ENCODE measurements at regions of chr11 and their contacts with region 1.

Region 1: DNA sequence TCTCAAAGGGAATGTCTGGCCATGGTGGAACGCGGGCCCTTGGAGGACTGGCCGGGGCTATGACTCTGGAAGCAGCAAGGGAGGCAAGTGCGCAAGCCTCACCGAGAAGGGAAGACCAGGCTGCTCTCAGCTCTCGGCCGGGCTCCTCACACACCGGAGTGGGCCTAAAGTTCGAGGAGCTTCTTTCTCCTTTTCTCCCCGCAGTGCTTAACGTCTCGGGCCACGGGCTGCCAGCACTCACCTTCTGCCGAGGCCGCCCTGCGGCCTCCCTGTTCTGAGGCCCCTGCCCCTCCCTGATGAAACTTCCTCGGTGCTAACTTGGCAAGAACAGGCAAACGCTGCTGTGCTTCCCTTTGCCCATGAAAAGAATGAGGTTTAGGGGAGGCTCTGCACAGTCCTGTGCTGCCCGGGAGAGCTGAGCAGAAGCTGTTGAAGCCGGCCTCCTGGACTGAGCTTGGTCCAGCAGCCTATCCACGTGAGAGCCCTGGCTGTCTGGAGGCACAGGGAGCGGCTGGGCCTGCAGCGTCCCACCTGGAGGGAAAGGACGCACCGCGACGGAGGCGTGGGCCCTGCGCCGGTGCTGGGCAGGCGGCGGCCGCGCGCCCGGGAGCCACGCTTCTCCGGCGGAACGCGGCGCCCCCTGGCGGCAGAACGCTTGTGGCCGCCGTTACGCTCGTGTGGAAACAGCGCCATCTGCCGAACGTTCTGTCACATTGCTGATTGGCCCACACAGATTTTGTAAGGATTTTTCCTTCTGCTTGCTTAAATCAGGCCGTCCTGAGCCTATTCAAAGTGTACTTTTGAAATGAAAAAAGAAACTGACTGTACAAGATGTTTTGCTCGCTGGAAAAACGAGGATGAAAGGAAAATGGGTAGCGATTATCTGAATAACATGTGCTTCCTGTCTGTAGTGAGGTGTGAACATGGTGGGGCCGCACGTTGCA is 65.0 kb upstream of the TMEM45B start:
- DNase-seq: peak; percentile 67
- ATAC-seq: peak; percentile 94
- H3K4me3 ChIP-seq: no peak overlapping the region
- H3K27ac ChIP-seq: no peak overlapping the region
- H3K4me1 ChIP-seq: no peaks in the 10 kb centered on the region
- H3K27me3 ChIP-seq: peaks cover 17% of the 10 kb centered on the region
- CTCF ChIP-seq: peak; percentile 100
- POLR2A ChIP-seq: no peak
- RAD21 ChIP-seq: peak; percentile 94

Region 2: GRCh38 chr11:129143335-129143734 is 607.3 kb before region 1 on chr11:
- CTCF ChIA-PET with region 1: no interaction called
- POLR2A ChIA-PET with region 1: no interaction called
- dilution Hi-C with region 1: no loop called
- in situ Hi-C with region 1: no loop called
- intact Hi-C with region 1: no loop called
- DNase-seq: peak; percentile 99
- ATAC-seq: peak; percentile 99
- H3K4me3 ChIP-seq: no peak overlapping the region
- H3K27ac ChIP-seq: no peak overlapping the region
- H3K4me1 ChIP-seq: no peaks in the 10 kb centered on the region
- H3K27me3 ChIP-seq: no peaks in the 10 kb centered on the region
- CTCF ChIP-seq: no peak
- POLR2A ChIP-seq: no peak
- RAD21 ChIP-seq: no peak

Region 3: DNA sequence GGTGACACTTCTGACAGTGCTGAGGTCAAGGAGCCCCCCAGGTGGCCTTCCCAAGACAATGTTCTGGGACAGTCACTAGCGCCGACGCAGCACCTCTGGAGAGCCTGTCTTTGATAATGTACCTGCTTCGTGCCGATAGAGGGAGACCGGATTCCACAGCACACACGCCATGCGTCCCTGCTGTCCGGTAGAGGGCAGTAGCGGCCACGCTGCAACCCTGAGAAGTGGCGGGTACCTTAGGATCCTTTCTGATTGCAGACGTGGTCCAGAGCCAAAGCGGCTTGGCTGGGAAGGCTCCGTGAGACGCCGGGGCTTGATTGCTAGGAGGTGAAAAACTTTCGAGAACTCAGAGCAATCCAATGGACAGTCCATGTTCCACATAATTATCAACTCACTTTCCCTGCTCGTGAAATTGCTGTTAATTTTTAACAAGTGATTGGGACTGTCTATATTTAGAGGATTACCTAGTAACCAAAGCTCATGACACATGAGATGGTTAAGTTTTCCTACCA is 386.4 kb before region 1 on chr11:
- CTCF ChIA-PET with region 1: interaction called, 9 read pairs
- POLR2A ChIA-PET with region 1: no interaction called
- dilution Hi-C with region 1: no loop called
- in situ Hi-C with region 1: loop called (anchors 5 kb)
- intact Hi-C with region 1: loop called (anchors 1 kb)
- DNase-seq: peak; percentile 82
- ATAC-seq: peak; percentile 100
- H3K4me3 ChIP-seq: no peak overlapping the region
- H3K27ac ChIP-seq: no peak overlapping the region
- H3K4me1 ChIP-seq: no peaks in the 10 kb centered on the region
- H3K27me3 ChIP-seq: peaks cover 9% of the 10 kb centered on the region
- CTCF ChIP-seq: peak; percentile 100
- POLR2A ChIP-seq: peak; percentile 26; the same call in 1 of the 2 replicates
- RAD21 ChIP-seq: peak; percentile 97

Region 4: GRCh38 chr11:129410395-129410960 is 340.1 kb before region 1 on chr11:
- CTCF ChIA-PET with region 1: no interaction called
- POLR2A ChIA-PET with region 1: no interaction called
- dilution Hi-C with region 1: no loop called
- in situ Hi-C with region 1: no loop called
- intact Hi-C with region 1: no loop called
- DNase-seq: no peak
- ATAC-seq: no peak
- H3K4me3 ChIP-seq: no peak overlapping the region
- H3K27ac ChIP-seq: no peak overlapping the region
- H3K4me1 ChIP-seq: no peaks in the 10 kb centered on the region
- H3K27me3 ChIP-seq: no peaks in the 10 kb centered on the region
- CTCF ChIP-seq: no peak
- POLR2A ChIP-seq: no peak
- RAD21 ChIP-seq: no peak

Region 5: GRCh38 chr11:129695575-129696308 is 54.9 kb before region 1 on chr11:
- CTCF ChIA-PET with region 1: no interaction called
- POLR2A ChIA-PET with region 1: no interaction called
- dilution Hi-C with region 1: no loop called
- in situ Hi-C with region 1: no loop called
- intact Hi-C with region 1: no loop called
- DNase-seq: peak; percentile 13
- ATAC-seq: peak; percentile 93
- H3K4me3 ChIP-seq: no peak overlapping the region
- H3K27ac ChIP-seq: no peak overlapping the region
- H3K4me1 ChIP-seq: no peaks in the 10 kb centered on the region
- H3K27me3 ChIP-seq: peaks cover 14% of the 10 kb centered on the region
- CTCF ChIP-seq: peak; percentile 61
- POLR2A ChIP-seq: no peak
- RAD21 ChIP-seq: peak; percentile 65

Measured in IMR-90 (cell line).